AG04450 (cell line): ENCODE measurements at regions of chr15 and their contacts with region 1.

Region 1: DNA sequence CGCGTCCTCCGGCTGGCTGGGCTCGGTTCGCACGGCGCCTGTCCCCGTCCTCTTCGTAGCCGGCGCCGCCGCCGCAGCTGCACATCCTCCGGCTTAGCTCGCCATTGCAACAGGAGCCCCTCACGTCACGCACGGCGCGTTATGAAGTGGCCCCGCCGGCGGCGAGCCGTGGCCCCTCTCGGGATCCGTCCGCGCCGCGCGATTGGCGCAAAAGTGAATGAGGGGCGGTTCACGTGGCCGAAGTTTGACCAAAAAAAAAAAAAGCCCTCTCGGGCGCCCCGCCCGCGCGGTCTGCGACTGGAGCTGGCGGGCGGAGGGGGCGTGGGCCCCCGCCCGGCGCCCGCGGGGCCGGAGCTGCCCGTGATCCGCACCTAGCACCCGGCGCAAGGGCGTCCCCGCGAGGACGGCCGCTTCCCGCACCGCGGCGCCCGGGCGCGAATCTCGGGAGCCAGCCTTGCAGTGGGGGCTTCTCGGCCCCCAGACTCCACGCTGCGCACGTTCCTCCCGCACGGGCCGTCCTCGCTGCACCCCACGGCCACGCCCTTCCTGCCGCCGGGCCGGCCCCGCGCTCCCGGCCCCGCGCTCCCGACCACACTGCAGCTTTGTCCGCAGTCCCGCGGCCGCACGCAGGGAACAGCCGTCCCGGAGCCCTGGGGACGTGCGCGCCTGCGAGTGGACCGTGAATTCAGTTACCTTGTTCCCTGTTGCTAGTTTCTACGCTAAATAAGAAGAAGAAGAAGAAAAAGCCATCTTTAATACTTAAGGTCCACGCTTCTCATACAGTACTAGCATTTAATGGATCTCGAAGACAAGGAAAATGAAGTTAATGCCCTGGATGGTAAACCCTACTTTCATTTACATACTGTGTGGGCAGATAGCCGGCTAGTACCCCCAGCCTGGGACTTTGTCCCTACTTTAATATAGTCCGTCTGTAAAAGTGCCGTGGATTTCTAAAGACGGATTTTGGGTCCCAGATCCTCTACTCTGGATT is at the start of gene CHSY1:
- DNase-seq: peak; percentile 81
- H3K4me3 ChIP-seq: peak within 1 kb of the TSS; percentile 88
- H3K27ac ChIP-seq: peak within 1 kb of the TSS; percentile 65
- H3K27me3 ChIP-seq: no peaks in the 10 kb centered on the region
- CTCF ChIP-seq: no peak
- polyA plus RNA-seq, gene CHSY1: 44.6 and 49.2 TPM in 2 replicates

Region 2: GRCh38 chr15:101188637-101189408 is 63.3 kb before region 1 on chr15:
- CTCF ChIA-PET with region 1: interaction called, 3 read pairs
- POLR2A ChIA-PET with region 1: interaction called, 16 read pairs
- DNase-seq: no peak
- H3K4me3 ChIP-seq: peak overlapping the region; percentile 60
- H3K27ac ChIP-seq: peak overlapping the region; percentile 100
- H3K27me3 ChIP-seq: no peaks in the 10 kb centered on the region
- CTCF ChIP-seq: no peak

Region 3: DNA sequence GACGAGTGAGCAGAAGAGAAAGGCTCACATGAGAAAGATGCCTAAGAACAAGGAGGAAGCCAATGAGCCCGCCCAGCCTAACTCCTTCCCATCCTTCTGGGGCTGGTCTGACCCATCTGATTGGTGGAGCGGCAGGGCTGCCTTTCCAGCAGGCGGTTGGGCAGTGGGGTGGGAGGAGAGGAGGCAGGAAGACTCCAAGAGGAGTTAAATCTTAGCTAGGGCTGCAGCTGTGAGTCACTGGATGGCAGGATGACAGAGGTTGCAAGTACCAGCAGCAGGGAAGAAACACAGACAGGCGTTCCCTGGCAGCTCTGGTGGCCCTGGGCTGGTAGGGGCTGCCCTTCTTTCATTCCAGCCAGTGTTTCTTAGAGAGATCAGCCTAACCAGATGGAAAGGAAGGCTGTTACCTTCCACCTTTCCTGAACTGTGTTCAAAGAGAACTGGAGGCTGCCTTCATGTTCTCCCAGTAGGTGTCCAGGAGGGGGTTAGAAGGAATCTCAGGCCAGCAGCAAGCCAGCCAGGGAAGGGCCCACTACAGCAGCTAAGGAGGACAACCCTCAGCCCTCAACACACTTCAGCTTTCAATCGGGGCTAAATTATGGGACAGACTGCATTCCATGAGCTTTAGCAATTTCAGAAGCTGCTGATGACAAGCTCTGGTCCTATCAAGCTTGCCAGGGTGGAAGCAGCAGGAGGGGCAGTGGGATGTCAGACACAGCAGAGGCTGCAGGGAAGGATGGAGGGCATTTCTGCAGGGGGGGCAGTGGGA is 50.5 kb before region 1 on chr15:
- CTCF ChIA-PET with region 1: no interaction called
- POLR2A ChIA-PET with region 1: interaction called, 13 read pairs
- DNase-seq: peak; percentile 93
- H3K4me3 ChIP-seq: peak overlapping the region; percentile 31; the same call in 1 of the 2 replicates
- H3K27ac ChIP-seq: peak overlapping the region; percentile 91
- H3K27me3 ChIP-seq: no peaks in the 10 kb centered on the region
- CTCF ChIP-seq: no peak

Region 4: GRCh38 chr15:101225658-101226057 is 26.5 kb before region 1 on chr15:
- CTCF ChIA-PET with region 1: no interaction called
- POLR2A ChIA-PET with region 1: no interaction called
- DNase-seq: no peak
- H3K4me3 ChIP-seq: no peak overlapping the region
- H3K27ac ChIP-seq: no peak overlapping the region
- H3K27me3 ChIP-seq: no peaks in the 10 kb centered on the region
- CTCF ChIP-seq: no peak

Region 5: GRCh38 chr15:101413239-101413638 is 161.1 kb after region 1 on chr15:
- CTCF ChIA-PET with region 1: no interaction called
- POLR2A ChIA-PET with region 1: no interaction called
- DNase-seq: no peak
- H3K4me3 ChIP-seq: no peak overlapping the region
- H3K27ac ChIP-seq: no peak overlapping the region
- H3K27me3 ChIP-seq: no peaks in the 10 kb centered on the region
- CTCF ChIP-seq: no peak